Activated CD4-positive, alpha-beta memory T cell treated with anti-CD3 and anti-CD28 coated beads for 36 hours (primary cell): ENCODE measurements at regions of chr15 and their contacts with region 1.

Region 1: DNA sequence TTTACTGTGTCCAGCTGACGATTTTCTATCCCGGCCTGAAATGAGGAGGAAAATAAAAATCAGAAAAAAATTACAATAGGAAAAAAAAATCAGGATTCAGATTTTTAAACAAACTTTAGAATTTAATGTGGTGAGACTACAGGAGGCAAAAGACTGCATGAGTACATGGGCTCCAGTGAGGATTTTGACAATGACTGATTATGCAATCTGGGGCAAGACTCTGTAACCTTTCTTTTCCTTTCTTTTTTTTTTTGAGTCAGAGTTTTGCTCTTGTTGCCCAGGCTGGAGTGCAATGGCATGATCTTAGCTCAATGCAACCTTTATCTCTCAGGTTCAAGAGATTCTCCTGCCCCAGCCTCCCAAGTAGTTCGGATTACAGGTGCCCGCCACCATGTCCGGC is 29.9 kb downstream of the SPG11 start:
- DNase-seq: peak; percentile 18
- H3K4me3 Mint-ChIP-seq: peak overlapping the region; percentile 70
- H3K27ac Mint-ChIP-seq: peak overlapping the region; percentile 96
- H3K4me1 Mint-ChIP-seq: peaks cover 23% of the 10 kb centered on the region
- H3K27me3 Mint-ChIP-seq: no peaks in the 10 kb centered on the region

Region 2: GRCh38 chr15:44347495-44347894 is 286.1 kb before region 1 on chr15:
- CTCF ChIA-PET with region 1: no interaction called
- POLR2A ChIA-PET with region 1: no interaction called
- intact Hi-C with region 1: no loop called
- DNase-seq: no peak
- H3K4me3 Mint-ChIP-seq: no peak overlapping the region
- H3K27ac Mint-ChIP-seq: no peak overlapping the region
- H3K4me1 Mint-ChIP-seq: no peaks in the 10 kb centered on the region
- H3K27me3 Mint-ChIP-seq: no peaks in the 10 kb centered on the region

Region 3: DNA sequence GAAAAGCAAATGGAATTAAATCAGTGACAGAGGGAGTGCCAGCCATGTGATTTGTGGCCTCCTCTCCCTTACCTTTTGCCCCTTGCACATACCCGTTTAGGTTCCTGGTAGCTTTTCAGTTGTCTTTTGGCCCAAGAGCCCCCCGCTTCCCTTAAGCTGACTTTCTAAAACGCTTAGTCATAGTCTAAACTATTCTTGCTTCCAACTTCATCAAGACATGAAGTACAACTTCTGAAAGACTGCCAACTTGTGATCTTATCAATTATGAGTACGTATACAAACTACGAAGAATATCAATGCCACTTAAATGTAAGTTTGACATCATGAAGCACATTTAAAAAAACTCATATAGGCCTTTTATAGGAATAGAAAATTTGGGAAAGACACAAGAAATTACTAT is 34.7 kb before region 1 on chr15:
- CTCF ChIA-PET with region 1: interaction called, 3 read pairs
- POLR2A ChIA-PET with region 1: interaction called, 3 read pairs
- intact Hi-C with region 1: loop called (anchors 5 kb)
- DNase-seq: no peak
- H3K4me3 Mint-ChIP-seq: no peak overlapping the region
- H3K27ac Mint-ChIP-seq: peak overlapping the region; percentile 53
- H3K4me1 Mint-ChIP-seq: peaks cover 30% of the 10 kb centered on the region
- H3K27me3 Mint-ChIP-seq: no peaks in the 10 kb centered on the region

Region 4: GRCh38 chr15:44676676-44677075 is 43.1 kb after region 1 on chr15:
- CTCF ChIA-PET with region 1: no interaction called
- POLR2A ChIA-PET with region 1: no interaction called
- intact Hi-C with region 1: no loop called
- DNase-seq: peak; percentile 77
- H3K4me3 Mint-ChIP-seq: peak overlapping the region; percentile 74
- H3K27ac Mint-ChIP-seq: peak overlapping the region; percentile 95
- H3K4me1 Mint-ChIP-seq: peaks cover 83% of the 10 kb centered on the region
- H3K27me3 Mint-ChIP-seq: no peaks in the 10 kb centered on the region

Region 5: GRCh38 chr15:44698641-44699040 is 65.0 kb after region 1 on chr15:
- CTCF ChIA-PET with region 1: no interaction called
- POLR2A ChIA-PET with region 1: no interaction called
- intact Hi-C with region 1: no loop called
- DNase-seq: no peak
- H3K4me3 Mint-ChIP-seq: no peak overlapping the region
- H3K27ac Mint-ChIP-seq: no peak overlapping the region
- H3K4me1 Mint-ChIP-seq: peaks cover 22% of the 10 kb centered on the region
- H3K27me3 Mint-ChIP-seq: no peaks in the 10 kb centered on the region

Region 6: DNA sequence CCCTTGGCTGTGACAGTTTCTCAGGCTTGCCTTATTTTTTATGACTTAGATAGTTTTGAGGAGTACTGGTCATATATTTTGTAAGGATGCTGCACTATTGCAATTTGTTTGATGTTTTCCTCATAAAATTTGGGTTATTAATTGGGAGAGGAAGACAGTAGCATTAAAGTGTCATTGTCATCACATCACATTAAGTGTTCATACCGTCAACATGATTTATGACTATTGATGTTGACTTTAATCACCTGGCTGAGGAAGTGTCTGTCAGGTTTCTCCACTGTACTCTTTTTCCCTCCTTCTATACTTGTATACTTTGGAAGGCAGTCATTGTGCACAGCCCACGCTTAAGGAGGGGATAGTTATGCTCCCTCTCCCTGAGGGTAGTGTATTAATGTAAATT is 129.6 kb after region 1 on chr15:
- CTCF ChIA-PET with region 1: no interaction called
- POLR2A ChIA-PET with region 1: no interaction called
- intact Hi-C with region 1: no loop called
- DNase-seq: no peak
- H3K4me3 Mint-ChIP-seq: no peak overlapping the region
- H3K27ac Mint-ChIP-seq: no peak overlapping the region
- H3K4me1 Mint-ChIP-seq: peaks cover 2% of the 10 kb centered on the region
- H3K27me3 Mint-ChIP-seq: no peaks in the 10 kb centered on the region